ENCODE measurements at regions of chr1 and their contacts with region 1.

Region 1: GRCh38 chr1:151839457-151840405 is at the start of gene C2CD4D:
- DNase-seq: peak; percentile 94
- H3K4me3 ChIP-seq: peak within 1 kb of the TSS; percentile 41 to 53 (median 52)
- H3K27ac ChIP-seq: peak within 1 kb of the TSS; percentile 94
- H3K4me1 ChIP-seq: peaks cover 57% of the 10 kb centered on the region
- H3K27me3 ChIP-seq: no peaks in the 10 kb centered on the region
- CTCF ChIP-seq: peak in 1 of 2 donors; percentile 19
- total RNA-seq, gene C2CD4D: 0.17 to 0.33 TPM

Region 2: DNA sequence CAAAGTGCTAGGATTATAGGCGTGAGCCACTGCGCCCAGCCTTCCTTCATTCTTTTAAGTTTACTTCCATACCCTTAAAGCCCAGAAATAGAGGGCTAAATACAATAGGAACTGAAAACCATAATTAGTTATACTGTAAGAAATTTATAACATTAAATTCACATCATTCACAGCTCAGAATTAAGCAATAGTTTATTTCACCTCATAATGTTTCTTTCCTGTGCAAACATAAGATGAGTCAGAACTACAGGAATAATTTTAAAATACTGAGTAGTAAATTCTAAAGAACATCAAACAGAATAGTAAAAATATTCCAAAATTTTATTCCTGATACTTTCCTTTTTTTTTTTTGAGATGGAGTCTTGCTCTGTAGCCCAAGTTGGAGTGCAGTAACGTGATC is 404.6 kb before region 1 on chr1:
- CTCF ChIA-PET with region 1: no interaction called
- dilution Hi-C with region 1: no loop called
- in situ Hi-C with region 1: loop called (anchors 10 to 25 kb)
- intact Hi-C with region 1: no loop called
- DNase-seq: no peak
- H3K4me3 ChIP-seq: no peak overlapping the region
- H3K27ac ChIP-seq: no peak overlapping the region
- H3K4me1 ChIP-seq: no peaks in the 10 kb centered on the region
- H3K27me3 ChIP-seq: no peaks in the 10 kb centered on the region
- CTCF ChIP-seq: no peak

Region 3: GRCh38 chr1:151539990-151540981 is 299.4 kb before region 1 on chr1 and contains the start of gene TUFT1:
- CTCF ChIA-PET with region 1: no interaction called
- dilution Hi-C with region 1: no loop called
- in situ Hi-C with region 1: loop called in 1 of 2 experiments (anchors 25 kb)
- intact Hi-C with region 1: no loop called
- DNase-seq: peak; percentile 90
- H3K4me3 ChIP-seq: peak within 1 kb of the TSS; percentile 72 to 76 (median 76)
- H3K27ac ChIP-seq: peak within 1 kb of the TSS; percentile 66
- H3K4me1 ChIP-seq: peaks cover 40% of the 10 kb centered on the region
- H3K27me3 ChIP-seq: no peaks in the 10 kb centered on the region
- CTCF ChIP-seq: no peak
- total RNA-seq, gene TUFT1: 43.3 to 59.0 TPM

Region 4: GRCh38 chr1:151619489-151620093 is 220.1 kb before region 1 on chr1:
- CTCF ChIA-PET with region 1: no interaction called
- dilution Hi-C with region 1: loop called (anchors 5 kb)
- in situ Hi-C with region 1: no loop called
- intact Hi-C with region 1: no loop called
- DNase-seq: peak; percentile 16
- H3K4me3 ChIP-seq: no peak overlapping the region
- H3K27ac ChIP-seq: no peak overlapping the region
- H3K4me1 ChIP-seq: peaks cover 17% of the 10 kb centered on the region
- H3K27me3 ChIP-seq: no peaks in the 10 kb centered on the region
- CTCF ChIP-seq: no peak

Region 5: GRCh38 chr1:151762941-151763921 is 76.5 kb before region 1 on chr1 and contains the start of gene MRPL9:
- CTCF ChIA-PET with region 1: interaction called, 11 read pairs
- dilution Hi-C with region 1: no loop called
- in situ Hi-C with region 1: no loop called
- intact Hi-C with region 1: no loop called
- DNase-seq: peak; percentile 80
- H3K4me3 ChIP-seq: peak within 1 kb of the TSS; percentile 86 to 93 (median 89)
- H3K27ac ChIP-seq: peak within 1 kb of the TSS; percentile 85
- H3K4me1 ChIP-seq: peaks cover 19% of the 10 kb centered on the region
- H3K27me3 ChIP-seq: no peaks in the 10 kb centered on the region
- CTCF ChIP-seq: no peak
- total RNA-seq, gene MRPL9: 47.5 to 77.4 TPM

Region 6: GRCh38 chr1:152001391-152002249 is 161.9 kb after region 1 on chr1:
- CTCF ChIA-PET with region 1: no interaction called
- dilution Hi-C with region 1: no loop called
- in situ Hi-C with region 1: no loop called
- intact Hi-C with region 1: loop called (anchors 2 kb)
- DNase-seq: peak; percentile 100
- H3K4me3 ChIP-seq: no peak overlapping the region
- H3K27ac ChIP-seq: peak overlapping the region; percentile 96
- H3K4me1 ChIP-seq: peaks cover 73% of the 10 kb centered on the region
- H3K27me3 ChIP-seq: no peaks in the 10 kb centered on the region
- CTCF ChIP-seq: peak; percentile 92 to 96